ENCODE measurements at regions of chr10 and their contacts with region 1.

Region 1: DNA sequence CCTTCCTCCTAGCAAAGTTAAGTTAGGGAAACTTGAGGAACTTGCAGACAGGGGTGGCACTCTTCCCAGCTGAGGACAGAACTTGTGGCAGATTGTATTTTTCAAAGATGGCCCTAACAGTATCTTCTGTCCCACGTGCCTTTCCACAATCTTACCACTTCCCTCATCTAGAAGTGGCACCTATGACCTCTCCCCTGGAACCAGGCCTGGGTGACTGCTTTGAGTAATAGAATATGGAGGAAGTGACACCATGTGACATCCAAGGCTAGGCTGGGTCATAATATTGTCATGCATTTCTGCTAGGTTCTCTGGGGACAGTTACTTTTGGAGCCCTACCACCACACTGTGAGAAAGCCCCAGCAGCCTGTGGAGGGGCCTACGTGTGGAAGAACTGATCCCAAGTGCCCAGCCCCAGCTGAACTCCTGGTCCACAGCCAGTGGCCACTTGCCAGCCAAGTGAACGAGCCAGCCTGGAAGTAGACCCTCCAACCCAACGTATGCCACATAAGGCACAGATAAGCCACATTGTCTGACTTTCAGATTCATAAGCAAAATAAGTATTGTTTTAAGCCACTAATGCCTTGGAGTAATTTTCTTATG is 193.7 kb downstream of the PTPN20 start:
- DNase-seq: peak in 1 of 2 donors; percentile 71
- ATAC-seq: peak; percentile 23
- H3K4me3 ChIP-seq: no peak overlapping the region
- H3K27ac ChIP-seq: peak overlapping the region in 1 of 2 donors; percentile 1
- H3K4me1 ChIP-seq: peaks cover 0 to 3% of the 10 kb centered on the region in 2 donors
- H3K27me3 ChIP-seq: no peaks in the 10 kb centered on the region

Region 2: DNA sequence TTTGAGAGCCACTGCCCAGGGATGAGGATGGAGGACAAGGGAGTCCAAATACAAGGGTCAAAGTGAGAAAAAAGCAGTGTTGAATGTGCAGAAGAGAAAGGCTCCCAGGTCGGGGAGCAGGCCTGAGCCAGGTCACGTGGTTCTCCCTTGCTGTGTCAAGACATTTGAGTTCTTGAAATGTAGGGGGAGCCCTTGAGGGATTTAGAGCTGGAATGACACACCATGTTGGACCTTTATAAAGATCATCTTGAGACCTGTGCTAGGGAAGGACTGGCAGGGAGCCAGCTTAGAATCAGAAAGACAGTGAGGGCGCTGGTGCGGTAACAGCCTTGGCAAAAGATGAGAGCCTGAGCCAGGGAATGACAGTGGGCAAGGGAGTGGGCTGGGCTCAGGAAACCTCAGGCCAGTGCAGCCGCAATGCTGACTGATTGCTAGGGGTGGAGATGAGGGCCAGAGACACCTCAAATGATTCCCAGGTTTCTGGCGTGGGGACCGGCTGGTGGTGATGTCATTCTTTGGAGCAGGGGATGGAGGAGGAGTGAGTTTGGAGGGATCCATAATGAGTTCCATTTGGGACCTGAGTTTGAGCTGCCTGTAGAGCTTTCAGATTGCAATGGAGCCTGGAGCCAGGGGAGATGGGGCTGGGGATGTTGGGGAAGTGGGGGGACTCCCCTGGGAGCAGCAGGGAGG is 73.5 kb before region 1 on chr10:
- intact Hi-C with region 1: no loop called
- DNase-seq: peak in 1 of 2 donors; percentile 66
- ATAC-seq: peak; percentile 3
- H3K4me3 ChIP-seq: no peak overlapping the region
- H3K27ac ChIP-seq: no peak overlapping the region
- H3K4me1 ChIP-seq: no peaks in the 10 kb centered on the region
- H3K27me3 ChIP-seq: no peaks in the 10 kb centered on the region

Region 3: DNA sequence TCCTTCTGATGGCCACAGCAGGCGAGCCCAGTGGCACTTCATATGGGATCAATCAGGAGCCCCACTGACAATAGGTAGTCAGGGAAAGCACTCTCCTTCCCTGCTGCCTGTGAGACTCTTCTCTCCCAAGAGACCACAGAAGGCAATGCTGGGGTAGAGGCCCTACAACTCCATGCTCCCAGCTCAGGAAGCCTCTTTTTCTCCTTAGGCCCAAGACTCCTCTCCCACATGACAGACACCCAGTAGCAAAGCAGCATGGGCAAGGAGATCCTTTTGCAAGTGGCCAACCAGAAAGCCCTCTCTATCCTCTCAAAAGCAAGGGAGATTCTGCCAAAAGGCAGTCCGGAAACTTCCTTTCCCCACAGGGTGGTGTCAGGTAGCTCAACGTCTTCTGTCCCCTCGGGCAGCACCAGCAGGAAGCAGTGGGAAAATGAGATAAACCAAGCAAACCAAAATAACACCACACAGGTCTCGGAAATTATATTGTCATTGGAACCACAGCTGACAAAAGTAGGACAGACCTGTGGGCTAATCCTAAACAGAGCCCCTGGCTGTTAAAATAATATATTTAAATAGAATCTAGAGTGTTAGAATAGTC is 22.4 kb after region 1 on chr10:
- intact Hi-C with region 1: no loop called
- DNase-seq: no peak
- ATAC-seq: no peak
- H3K4me3 ChIP-seq: no peak overlapping the region
- H3K27ac ChIP-seq: no peak overlapping the region
- H3K4me1 ChIP-seq: no peaks in the 10 kb centered on the region
- H3K27me3 ChIP-seq: no peaks in the 10 kb centered on the region

Region 4: DNA sequence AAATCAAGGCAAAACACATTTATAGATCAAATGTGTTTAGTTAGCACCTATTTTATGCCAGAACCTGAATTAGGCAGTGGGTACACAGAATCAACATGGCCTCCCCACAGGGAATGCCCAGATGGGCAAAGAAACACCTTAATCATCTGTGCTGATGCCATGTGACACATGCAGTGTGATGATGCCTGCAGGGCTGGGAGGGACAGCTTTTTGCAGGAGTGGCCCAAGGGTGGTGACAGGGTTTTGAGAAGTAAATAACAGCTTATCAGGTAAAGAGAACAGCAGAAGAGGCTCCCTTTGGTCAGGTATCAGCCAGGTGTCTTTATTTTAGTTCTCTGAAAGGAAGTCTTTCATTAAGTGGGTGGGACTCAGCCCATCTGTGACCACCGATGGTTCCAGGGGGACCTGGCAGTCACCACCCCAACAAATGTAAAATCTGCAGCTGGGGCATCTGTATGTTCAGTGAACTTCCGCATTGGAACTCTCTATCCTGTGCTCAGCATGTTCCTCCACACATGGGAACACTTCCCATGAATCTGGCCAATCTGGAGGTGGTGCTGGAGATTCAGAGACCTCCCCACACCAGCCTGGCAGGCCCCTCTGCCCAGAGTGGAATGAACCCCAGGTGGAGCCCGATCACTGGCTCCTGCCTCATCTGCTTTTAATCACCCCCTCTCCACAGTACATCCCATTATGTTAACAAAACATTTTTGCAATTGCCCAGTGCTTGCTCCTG is 54.5 kb after region 1 on chr10:
- intact Hi-C with region 1: no loop called
- DNase-seq: no peak
- ATAC-seq: no peak
- H3K4me3 ChIP-seq: no peak overlapping the region
- H3K27ac ChIP-seq: no peak overlapping the region
- H3K4me1 ChIP-seq: no peaks in the 10 kb centered on the region
- H3K27me3 ChIP-seq: no peaks in the 10 kb centered on the region

Region 5: GRCh38 chr10:47257396-47258120 is 152.7 kb after region 1 on chr10:
- intact Hi-C with region 1: loop called in 1 of 2 experiments (anchors 5 kb)
- DNase-seq: no peak
- ATAC-seq: no peak
- H3K4me3 ChIP-seq: no peak overlapping the region
- H3K27ac ChIP-seq: no peak overlapping the region
- H3K4me1 ChIP-seq: no peaks in the 10 kb centered on the region
- H3K27me3 ChIP-seq: no peaks in the 10 kb centered on the region